Mammary epithelial cell (primary cell): ENCODE measurements at regions of chr7 and their contacts with region 1.

Region 1: DNA sequence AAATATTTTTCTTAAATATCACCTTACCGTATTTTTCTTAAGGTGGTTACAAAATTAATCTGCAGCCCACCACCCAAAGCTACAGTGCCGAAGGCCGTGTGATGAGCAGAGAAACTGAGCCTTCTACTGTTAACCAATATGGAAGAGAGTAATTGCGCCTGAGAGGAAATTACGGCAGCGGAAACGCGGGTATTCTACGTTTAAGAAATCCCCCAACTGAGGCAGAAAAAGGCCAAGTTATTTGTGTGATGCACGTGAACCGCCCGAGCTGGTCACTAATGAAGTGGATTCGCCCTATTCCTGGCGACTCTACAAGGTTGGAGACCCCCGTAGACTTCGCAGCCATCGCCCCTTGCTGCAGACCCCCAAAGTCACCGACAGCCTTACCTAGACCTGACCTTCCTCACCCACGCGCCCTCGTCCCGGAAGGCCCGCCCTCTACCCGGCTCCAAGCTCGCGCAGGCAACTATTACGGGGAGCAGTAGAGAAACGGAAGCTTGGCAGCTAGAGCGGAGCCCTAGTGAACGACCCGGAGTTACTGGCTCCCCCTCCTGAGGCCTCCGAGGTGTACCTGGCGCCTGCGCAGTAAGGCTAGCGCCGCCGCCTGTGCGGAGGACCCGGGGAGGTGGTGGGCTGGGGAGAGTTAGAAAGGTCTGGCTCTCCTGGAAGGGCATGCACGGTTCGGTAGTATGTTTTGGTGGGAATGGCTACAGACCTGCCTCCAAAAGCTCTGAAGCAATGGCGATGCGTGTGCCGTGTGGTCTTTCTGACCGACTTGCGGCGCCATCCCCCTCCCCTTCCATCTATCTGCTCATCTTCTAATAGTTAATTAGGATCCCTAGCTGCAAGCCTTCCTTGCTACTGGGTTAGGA is at the start of gene MRPS33:
- DNase-seq: peak; percentile 92
- H3K4me3 ChIP-seq: peak within 1 kb of the TSS; percentile 69 to 90 (median 88)
- H3K27ac ChIP-seq: peak within 1 kb of the TSS; percentile 97
- H3K4me1 ChIP-seq: peaks cover 10% of the 10 kb centered on the region
- H3K27me3 ChIP-seq: no peaks in the 10 kb centered on the region
- CTCF ChIP-seq: peak; percentile 43 to 68
- total RNA-seq, gene MRPS33: 17.8 to 67.7 TPM

Region 2: GRCh38 chr7:140541513-140542227 is 473.1 kb before region 1 on chr7:
- CTCF ChIA-PET with region 1: no interaction called
- dilution Hi-C with region 1: no loop called
- in situ Hi-C with region 1: loop called in 1 of 2 experiments (anchors 25 kb)
- intact Hi-C with region 1: no loop called
- DNase-seq: peak; percentile 87
- H3K4me3 ChIP-seq: no peak overlapping the region
- H3K27ac ChIP-seq: no peak overlapping the region
- H3K4me1 ChIP-seq: peaks cover 18% of the 10 kb centered on the region
- H3K27me3 ChIP-seq: no peaks in the 10 kb centered on the region
- CTCF ChIP-seq: no peak

Region 3: DNA sequence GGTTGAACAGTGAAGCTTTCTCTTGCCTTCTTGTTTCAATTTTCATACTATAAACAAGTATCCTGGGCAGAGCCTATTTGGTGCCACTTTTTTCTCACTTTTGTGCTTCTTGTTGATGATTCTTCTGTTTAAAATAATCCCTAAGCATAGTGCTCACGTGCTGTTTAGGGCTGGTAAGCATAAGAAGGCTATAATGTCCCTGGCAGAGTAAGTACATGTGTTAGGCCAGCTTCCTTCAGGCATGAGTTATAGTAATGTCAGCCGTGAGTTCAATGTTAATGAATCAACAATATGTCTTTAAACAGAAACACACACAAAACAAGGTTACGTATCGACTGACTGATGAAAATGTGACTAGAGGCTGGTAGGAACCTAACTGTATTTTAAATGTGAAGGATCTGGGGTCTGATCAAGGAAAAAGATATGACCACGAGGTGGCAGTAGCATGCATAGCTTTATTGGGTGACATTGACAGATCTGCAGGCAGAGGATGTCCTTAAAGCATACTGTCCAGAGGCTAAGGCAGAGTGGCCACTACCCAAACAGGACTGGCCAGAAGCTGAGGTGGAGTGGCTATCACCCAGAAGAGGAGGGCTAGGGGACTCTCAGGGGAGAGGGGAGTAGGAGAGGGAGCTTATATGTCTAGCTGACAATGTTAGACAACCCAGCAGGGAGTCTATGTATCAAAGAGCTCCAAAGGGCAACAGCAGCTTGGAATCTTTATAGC is 203.8 kb before region 1 on chr7:
- CTCF ChIA-PET with region 1: interaction called, 12 read pairs
- dilution Hi-C with region 1: no loop called
- in situ Hi-C with region 1: loop called (anchors 5 kb)
- intact Hi-C with region 1: loop called (anchors 1 kb)
- DNase-seq: peak; percentile 55
- H3K4me3 ChIP-seq: no peak overlapping the region
- H3K27ac ChIP-seq: no peak overlapping the region
- H3K4me1 ChIP-seq: no peaks in the 10 kb centered on the region
- H3K27me3 ChIP-seq: no peaks in the 10 kb centered on the region
- CTCF ChIP-seq: peak; percentile 54 to 65

Region 4: DNA sequence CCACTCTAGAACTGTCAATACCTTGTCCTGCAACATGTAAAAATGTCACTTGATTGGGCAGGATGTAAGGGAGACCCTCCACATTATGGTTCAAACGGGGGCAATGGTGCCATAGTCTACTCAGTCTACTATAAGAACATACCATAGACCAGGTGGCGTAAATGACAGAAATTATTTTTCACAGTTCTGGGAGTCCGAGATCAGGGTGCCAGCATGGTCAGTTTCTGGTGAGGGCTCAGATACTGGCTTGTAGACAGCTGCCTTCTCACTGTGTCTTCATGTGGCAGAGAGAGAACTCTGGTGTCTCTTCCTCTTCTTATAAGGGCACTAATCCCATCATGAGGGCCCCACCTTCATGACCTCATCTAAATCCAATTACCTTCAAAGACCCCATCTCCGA is 40.4 kb after region 1 on chr7:
- CTCF ChIA-PET with region 1: no interaction called
- dilution Hi-C with region 1: no loop called
- in situ Hi-C with region 1: no loop called
- intact Hi-C with region 1: no loop called
- DNase-seq: no peak
- H3K4me3 ChIP-seq: no peak overlapping the region
- H3K27ac ChIP-seq: no peak overlapping the region
- H3K4me1 ChIP-seq: no peaks in the 10 kb centered on the region
- H3K27me3 ChIP-seq: peaks cover 3% of the 10 kb centered on the region
- CTCF ChIP-seq: no peak

Region 5: GRCh38 chr7:141220263-141220880 is 205.6 kb after region 1 on chr7:
- CTCF ChIA-PET with region 1: no interaction called
- dilution Hi-C with region 1: no loop called
- in situ Hi-C with region 1: no loop called
- intact Hi-C with region 1: loop called (anchors 10 kb)
- DNase-seq: no peak
- H3K4me3 ChIP-seq: no peak overlapping the region
- H3K27ac ChIP-seq: no peak overlapping the region
- H3K4me1 ChIP-seq: no peaks in the 10 kb centered on the region
- H3K27me3 ChIP-seq: no peaks in the 10 kb centered on the region
- CTCF ChIP-seq: peak; percentile 29 to 57

Region 6: DNA sequence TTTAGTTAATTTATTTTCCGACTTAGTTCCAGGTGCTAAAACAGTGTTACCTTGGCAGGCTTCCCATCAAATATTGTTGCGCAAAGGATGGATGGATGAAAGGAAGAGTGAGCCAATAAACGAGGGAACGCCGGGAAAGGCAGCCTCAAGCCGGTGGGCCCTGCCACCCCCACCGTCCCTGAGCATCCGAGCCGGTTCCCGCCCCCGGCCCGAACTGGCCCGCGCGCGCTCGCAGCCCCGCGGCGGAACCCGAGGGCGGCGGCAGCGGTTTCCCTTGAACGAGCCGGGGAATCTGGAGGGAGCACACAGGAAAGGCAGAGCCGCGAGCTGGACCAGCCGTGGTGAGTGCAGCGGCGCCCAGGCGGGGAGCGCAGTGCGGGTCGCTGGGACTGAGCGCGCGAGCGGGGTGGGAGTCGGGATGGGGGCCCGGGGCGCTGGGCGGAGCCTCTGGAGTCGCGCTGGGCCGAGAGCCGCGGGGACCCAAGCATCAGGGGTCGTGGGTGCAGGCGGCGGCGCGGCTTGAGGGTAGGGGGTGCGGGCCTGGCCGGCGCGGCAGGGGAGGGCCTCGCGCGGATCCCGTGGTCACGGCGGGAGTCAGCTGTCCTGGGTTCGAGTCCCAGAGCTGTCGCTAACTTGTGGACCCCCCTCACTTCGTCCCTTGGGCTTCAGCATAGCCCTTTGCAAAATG is 536.5 kb after region 1 on chr7 and contains the start of gene AGK:
- CTCF ChIA-PET with region 1: no interaction called
- dilution Hi-C with region 1: no loop called
- in situ Hi-C with region 1: no loop called
- intact Hi-C with region 1: loop called (anchors 2 kb)
- DNase-seq: peak; percentile 66
- H3K4me3 ChIP-seq: peak within 1 kb of the TSS; percentile 65 to 97 (median 84)
- H3K27ac ChIP-seq: peak within 1 kb of the TSS; percentile 49
- H3K4me1 ChIP-seq: peaks cover 6% of the 10 kb centered on the region
- H3K27me3 ChIP-seq: no peaks in the 10 kb centered on the region
- CTCF ChIP-seq: no peak
- total RNA-seq, gene AGK: 26.2 to 34.7 TPM

Region 7: GRCh38 chr7:141575164-141575563 is 560.4 kb after region 1 on chr7:
- CTCF ChIA-PET with region 1: no interaction called
- dilution Hi-C with region 1: no loop called
- in situ Hi-C with region 1: no loop called
- intact Hi-C with region 1: no loop called
- DNase-seq: no peak
- H3K4me3 ChIP-seq: no peak overlapping the region
- H3K27ac ChIP-seq: no peak overlapping the region
- H3K4me1 ChIP-seq: no peaks in the 10 kb centered on the region
- H3K27me3 ChIP-seq: no peaks in the 10 kb centered on the region
- CTCF ChIP-seq: no peak

Region 8: DNA sequence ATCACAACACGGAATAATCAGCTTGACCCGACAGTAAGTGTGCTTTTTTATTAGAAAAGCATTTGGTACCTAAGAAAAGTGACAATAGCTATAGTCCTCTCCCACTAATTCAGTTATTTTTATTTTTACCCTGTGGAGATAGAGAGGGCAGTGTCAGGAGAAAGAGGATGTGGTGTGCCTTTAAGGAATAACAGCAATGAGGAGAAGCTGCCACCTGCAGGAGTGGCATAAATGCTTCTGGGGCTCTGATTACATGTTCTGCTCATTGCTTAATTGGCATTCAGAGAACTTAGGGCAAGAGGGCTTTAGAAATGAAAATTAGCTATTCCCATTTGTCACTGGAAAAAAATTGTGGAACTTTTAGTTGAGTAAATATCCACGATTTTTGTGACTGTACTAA is 627.1 kb after region 1 on chr7:
- CTCF ChIA-PET with region 1: no interaction called
- dilution Hi-C with region 1: no loop called
- in situ Hi-C with region 1: no loop called
- intact Hi-C with region 1: no loop called
- DNase-seq: no peak
- H3K4me3 ChIP-seq: no peak overlapping the region
- H3K27ac ChIP-seq: no peak overlapping the region
- H3K4me1 ChIP-seq: no peaks in the 10 kb centered on the region
- H3K27me3 ChIP-seq: no peaks in the 10 kb centered on the region
- CTCF ChIP-seq: peak in 1 of 2 donors; percentile 30